ENCODE measurements at regions of chr20 and their contacts with region 1.

Region 1: GRCh38 chr20:43749734-43750294 is 23.0 kb upstream of the GTSF1L start:
- DNase-seq: peak; percentile 61 to 88 (median 79)
- H3K4me3 ChIP-seq: peak overlapping the region in 1 of 59 donors; percentile 5
- H3K27ac ChIP-seq: no peak overlapping the region
- H3K27me3 ChIP-seq: peaks cover 0 to 31% (median 7%) of the 10 kb centered on the region in 45 donors
- CTCF ChIP-seq: peak; percentile 85 to 100 (median 100)

Region 2: GRCh38 chr20:43914311-43915210 is 164.7 kb after region 1 on chr20 and contains the start of gene TOX2:
- intact Hi-C with region 1: loop called in 1 of 2 experiments (anchors 10 kb)
- DNase-seq: no peak
- H3K4me3 ChIP-seq: peak within 1 kb of the TSS; percentile 23 to 70 (median 52)
- H3K27ac ChIP-seq: peak within 1 kb of the TSS in 1 of 59 donors; percentile 43
- H3K27me3 ChIP-seq: peaks cover 0 to 37% (median 21%) of the 10 kb centered on the region in 45 donors
- CTCF ChIP-seq: no peak
- total RNA-seq, gene TOX2: 5.5 to 33.1 (median 20.3) TPM

Region 3: GRCh38 chr20:44080646-44081267 is 330.9 kb after region 1 on chr20:
- intact Hi-C with region 1: loop called (anchors 1 to 2 kb)
- DNase-seq: peak in 9 of 10 donors; percentile 61 to 87 (median 76)
- H3K4me3 ChIP-seq: peak overlapping the region in 5 of 59 donors; percentile 14 to 20 (median 17)
- H3K27ac ChIP-seq: no peak overlapping the region
- H3K27me3 ChIP-seq: no peaks in the 10 kb centered on the region
- CTCF ChIP-seq: peak; percentile 95 to 100 (median 99)

Measured in dorsolateral prefrontal cortex (tissue), 120 donors.